IMR-90 (cell line): ENCODE measurements at regions of chr16 and their contacts with region 1.

Region 1: DNA sequence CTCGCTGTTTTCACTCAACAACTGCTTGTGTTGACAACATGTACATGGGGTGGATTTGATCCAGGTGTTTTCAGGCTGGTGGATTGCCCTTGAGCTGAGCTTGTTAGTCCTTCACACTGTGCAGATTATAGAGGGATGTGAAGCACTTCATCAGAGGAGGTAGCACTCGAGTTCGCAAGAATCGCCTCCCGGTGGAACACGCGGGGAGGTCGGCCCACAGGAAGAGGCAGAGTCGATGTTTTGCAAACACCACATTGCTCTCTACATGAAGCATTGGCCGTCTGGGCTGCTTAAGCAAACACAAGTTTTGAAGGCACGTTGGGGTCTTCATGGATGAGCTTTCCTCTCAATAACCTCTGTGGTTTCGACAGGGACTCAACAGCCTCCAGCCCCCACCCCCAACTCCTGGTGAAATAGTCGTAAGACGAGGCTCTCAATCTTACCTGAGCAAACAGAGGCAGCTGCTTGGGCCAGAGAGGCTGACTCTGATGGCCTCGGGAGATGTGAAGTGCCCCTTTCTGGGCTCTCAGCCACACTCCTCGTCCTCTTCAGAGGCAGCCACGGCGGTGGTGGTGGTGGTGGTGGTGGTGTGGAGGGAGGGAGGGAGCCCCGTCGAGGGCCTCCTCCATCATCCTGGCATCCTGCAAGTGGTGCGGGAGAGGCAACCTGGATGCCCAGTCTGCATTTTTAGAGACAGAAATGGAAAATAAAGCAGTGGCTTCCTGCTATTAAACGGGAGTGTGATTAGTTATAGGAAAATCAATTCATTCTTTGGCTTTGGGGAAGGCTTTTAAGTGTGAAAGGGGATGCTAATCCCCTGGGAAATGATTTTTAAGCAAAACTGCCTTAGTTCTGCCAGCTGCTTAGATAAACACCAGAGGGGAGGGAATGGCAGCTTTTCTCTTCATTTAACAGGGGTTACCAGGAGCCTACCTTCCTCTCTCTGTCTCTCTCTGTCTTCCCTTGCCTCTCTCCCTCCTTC is 552.5 kb upstream of the EEF2KMT start:
- DNase-seq: no peak
- ATAC-seq: no peak
- H3K4me3 ChIP-seq: no peak overlapping the region
- H3K27ac ChIP-seq: no peak overlapping the region
- H3K4me1 ChIP-seq: no peaks in the 10 kb centered on the region
- H3K27me3 ChIP-seq: no peaks in the 10 kb centered on the region
- CTCF ChIP-seq: no peak
- POLR2A ChIP-seq: no peak
- RAD21 ChIP-seq: no peak

Region 2: GRCh38 chr16:5560084-5560483 is 90.0 kb before region 1 on chr16:
- CTCF ChIA-PET with region 1: no interaction called
- POLR2A ChIA-PET with region 1: no interaction called
- dilution Hi-C with region 1: no loop called
- in situ Hi-C with region 1: loop called (anchors 25 kb)
- intact Hi-C with region 1: no loop called
- DNase-seq: no peak
- ATAC-seq: no peak
- H3K4me3 ChIP-seq: no peak overlapping the region
- H3K27ac ChIP-seq: no peak overlapping the region
- H3K4me1 ChIP-seq: no peaks in the 10 kb centered on the region
- H3K27me3 ChIP-seq: no peaks in the 10 kb centered on the region
- CTCF ChIP-seq: no peak
- POLR2A ChIP-seq: no peak
- RAD21 ChIP-seq: no peak

Region 3: GRCh38 chr16:5938607-5939006 is 288.6 kb after region 1 on chr16:
- CTCF ChIA-PET with region 1: no interaction called
- POLR2A ChIA-PET with region 1: no interaction called
- dilution Hi-C with region 1: no loop called
- in situ Hi-C with region 1: no loop called
- intact Hi-C with region 1: no loop called
- DNase-seq: no peak
- ATAC-seq: no peak
- H3K4me3 ChIP-seq: no peak overlapping the region
- H3K27ac ChIP-seq: no peak overlapping the region
- H3K4me1 ChIP-seq: no peaks in the 10 kb centered on the region
- H3K27me3 ChIP-seq: no peaks in the 10 kb centered on the region
- CTCF ChIP-seq: no peak
- POLR2A ChIP-seq: no peak
- RAD21 ChIP-seq: no peak